HEK293 (cell line): ENCODE measurements at regions of chr12 and their contacts with region 1.

Region 1: DNA sequence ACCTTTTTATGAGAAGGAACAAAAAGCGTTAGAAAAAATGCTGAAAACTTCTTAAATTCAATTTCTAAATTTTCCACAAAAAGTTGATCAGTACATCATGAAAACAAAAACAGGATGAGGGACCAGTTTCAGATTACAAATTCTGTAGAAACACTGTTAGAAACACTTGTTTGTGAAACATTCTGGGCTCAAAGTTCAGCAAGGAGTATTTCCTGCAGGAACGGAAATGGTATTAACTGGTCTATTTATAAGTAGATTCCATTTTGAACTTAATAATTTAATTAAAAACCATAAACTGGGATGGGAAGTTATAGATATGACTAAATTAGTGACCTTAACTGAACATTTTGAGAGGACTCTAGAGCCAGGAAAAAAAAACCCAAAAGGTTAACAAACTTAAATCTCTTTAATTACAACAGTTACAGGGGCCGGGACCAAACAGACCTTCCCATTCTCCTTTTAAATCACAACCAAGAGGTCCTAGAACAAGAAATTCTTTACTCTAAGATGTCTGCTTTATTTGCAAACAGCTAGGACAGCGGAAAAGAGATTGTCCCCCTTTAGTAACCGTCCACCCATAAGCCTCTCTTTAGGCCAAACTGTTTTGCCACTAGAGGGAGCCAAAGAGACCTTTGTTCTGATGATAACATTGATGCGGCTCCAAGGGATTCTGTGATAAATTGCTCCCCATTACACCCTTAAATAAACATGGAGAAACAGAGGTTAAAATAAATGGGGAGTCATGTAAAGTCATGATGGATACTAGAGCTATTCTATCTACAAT is 69.0 kb upstream of the RERGL start:
- H3K4me3 ChIP-seq: no peak overlapping the region
- H3K27ac ChIP-seq: no peak overlapping the region
- H3K4me1 ChIP-seq: no peaks in the 10 kb centered on the region
- CTCF ChIP-seq: no peak

Region 2: DNA sequence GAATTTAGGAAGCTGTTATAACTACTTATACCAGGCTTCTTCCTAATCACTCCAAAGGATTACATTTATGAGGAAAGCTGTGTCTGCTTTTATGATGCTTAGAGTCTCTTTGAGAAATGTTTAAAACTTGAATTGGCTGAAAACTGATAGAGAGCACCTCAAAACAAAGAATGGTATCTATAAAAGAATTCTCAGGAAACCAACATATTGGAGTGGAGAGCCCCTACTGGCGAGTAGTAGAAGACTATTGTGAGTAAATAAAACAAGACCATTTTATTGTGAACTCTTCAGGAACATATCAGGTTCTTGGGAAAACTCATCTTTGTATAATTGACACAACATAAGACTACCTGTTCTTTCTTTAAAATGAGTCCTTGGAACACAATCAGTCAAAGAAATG is 647.6 kb before region 1 on chr12:
- CTCF ChIA-PET with region 1: no interaction called
- POLR2A ChIA-PET with region 1: no interaction called
- H3K4me3 ChIP-seq: no peak overlapping the region
- H3K27ac ChIP-seq: no peak overlapping the region
- H3K4me1 ChIP-seq: no peaks in the 10 kb centered on the region
- CTCF ChIP-seq: no peak

Region 3: DNA sequence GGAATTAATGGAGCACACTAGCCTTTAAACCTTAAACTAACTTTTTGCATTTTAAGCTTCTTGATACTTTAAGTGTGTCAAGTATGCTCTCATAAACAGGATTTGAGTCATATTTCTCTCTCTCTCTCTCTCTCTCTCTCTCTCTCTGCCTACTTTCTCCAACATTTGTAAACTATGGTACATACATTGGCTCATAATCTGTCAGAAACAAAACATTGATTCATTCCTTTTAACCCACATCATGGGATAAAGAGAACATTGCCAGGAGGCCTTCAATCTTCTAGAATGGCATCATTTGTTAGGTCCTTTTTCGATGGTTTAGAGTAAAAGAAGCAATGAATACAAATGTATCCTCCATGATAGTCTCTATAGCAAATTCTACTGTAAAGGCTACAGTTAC is 12.6 kb after region 1 on chr12:
- CTCF ChIA-PET with region 1: interaction called, 30 read pairs
- POLR2A ChIA-PET with region 1: no interaction called
- H3K4me3 ChIP-seq: no peak overlapping the region
- H3K27ac ChIP-seq: no peak overlapping the region
- H3K4me1 ChIP-seq: no peaks in the 10 kb centered on the region
- CTCF ChIP-seq: no peak

Region 4: GRCh38 chr12:18183141-18183540 is 24.2 kb after region 1 on chr12:
- CTCF ChIA-PET with region 1: interaction called, 12 read pairs
- POLR2A ChIA-PET with region 1: no interaction called
- H3K4me3 ChIP-seq: no peak overlapping the region
- H3K27ac ChIP-seq: no peak overlapping the region
- H3K4me1 ChIP-seq: no peaks in the 10 kb centered on the region
- CTCF ChIP-seq: no peak